ENCODE measurements at regions of chr15 and their contacts with region 1.

Region 1: DNA sequence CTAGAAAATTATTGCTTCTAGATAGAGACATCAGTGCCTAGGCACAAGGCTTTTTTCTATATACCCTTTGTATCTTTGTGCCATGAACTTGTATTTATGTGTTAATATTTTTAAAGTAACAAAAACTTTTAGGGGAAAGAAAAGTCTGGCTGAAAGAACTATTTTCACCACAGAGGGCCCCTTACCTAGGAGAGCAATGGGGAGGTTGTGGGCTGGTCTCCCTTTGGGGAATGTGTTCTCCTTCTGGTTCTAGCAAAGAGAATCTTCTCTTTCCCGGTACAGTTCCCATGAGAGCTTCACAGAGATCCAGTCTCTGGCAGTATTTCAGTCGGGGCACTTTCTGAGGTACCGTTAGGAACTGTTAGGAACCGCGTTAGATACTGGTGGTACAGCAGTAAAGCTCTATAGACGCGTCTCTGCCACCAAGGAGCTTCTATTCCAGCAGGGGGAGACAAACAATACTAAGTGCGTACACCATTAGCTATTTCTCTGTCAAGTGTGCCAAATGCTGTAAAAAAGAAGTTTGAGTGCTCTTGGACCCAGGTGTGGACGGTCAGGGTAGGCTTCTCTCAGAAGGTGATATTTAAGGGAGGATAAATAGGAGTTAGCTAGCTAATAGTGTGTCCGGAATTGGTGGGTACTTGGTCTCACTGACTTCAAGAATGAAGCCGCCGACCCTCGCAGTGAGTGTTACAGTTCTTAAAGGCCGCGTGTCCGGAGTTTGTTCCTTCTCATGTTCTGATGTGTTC is 4.6 kb upstream of the EPB42 start:
- DNase-seq: no peak
- ATAC-seq: peak; percentile 83
- H3K4me3 Mint-ChIP-seq: no peak overlapping the region
- H3K27ac Mint-ChIP-seq: no peak overlapping the region
- H3K4me1 Mint-ChIP-seq: peaks cover 4% of the 10 kb centered on the region
- H3K27me3 Mint-ChIP-seq: peaks cover 8% of the 10 kb centered on the region
- CTCF ChIP-seq: no peak

Region 2: DNA sequence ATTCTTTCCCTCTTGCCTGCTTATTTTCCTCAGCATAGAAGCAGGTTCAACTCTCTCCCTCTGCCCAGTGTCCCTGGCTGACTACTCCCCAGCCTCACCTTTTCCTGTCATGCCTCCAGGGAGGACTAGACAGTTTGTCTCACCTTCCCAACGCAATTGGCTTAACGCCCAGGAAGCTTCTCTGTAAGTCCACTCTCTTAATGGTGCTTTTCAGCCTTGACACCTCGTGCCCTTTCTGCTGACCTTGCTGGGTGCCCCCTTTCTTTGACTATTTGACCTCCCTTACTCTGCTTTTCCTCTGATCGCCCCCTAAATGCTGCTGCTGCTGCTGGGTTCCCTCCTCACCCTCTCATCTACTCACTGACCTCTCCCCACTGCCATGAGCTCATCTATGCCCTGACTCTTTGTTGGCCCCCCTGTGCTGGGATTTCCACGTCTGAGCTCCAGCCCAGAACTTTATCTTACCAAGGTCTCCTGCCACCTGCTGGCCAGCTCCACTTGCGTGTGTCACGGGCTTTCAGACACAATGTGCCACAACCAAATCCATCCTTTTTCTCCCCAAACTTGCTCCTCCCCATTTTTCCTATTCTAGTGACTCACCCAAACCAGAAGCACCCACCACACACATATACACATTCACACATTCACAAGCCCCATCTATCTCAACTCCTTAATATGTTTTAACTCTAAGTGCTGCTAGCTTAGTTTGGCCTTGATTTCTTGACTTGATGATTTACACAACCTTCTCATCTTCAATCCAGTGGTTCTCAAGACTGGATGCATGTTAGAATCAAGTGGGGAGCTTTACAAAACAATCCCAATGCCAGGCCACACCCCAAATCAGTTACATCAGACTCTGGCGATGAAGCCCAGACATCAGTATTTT is 21.1 kb before region 1 on chr15:
- CTCF ChIA-PET with region 1: interaction called, 14 read pairs
- POLR2A ChIA-PET with region 1: no interaction called
- intact Hi-C with region 1: no loop called
- DNase-seq: peak; percentile 28
- ATAC-seq: peak; percentile 56
- H3K4me3 Mint-ChIP-seq: no peak overlapping the region
- H3K27ac Mint-ChIP-seq: no peak overlapping the region
- H3K4me1 Mint-ChIP-seq: peaks cover 6% of the 10 kb centered on the region
- H3K27me3 Mint-ChIP-seq: peaks cover 8% of the 10 kb centered on the region
- CTCF ChIP-seq: peak; percentile 29

Region 3: GRCh38 chr15:43270676-43271306 is 45.4 kb after region 1 on chr15:
- CTCF ChIA-PET with region 1: interaction called, 11 read pairs
- POLR2A ChIA-PET with region 1: no interaction called
- intact Hi-C with region 1: loop called (anchors 1 kb)
- DNase-seq: no peak
- ATAC-seq: peak; percentile 95
- H3K4me3 Mint-ChIP-seq: peak overlapping the region; percentile 54
- H3K27ac Mint-ChIP-seq: peak overlapping the region; percentile 91
- H3K4me1 Mint-ChIP-seq: peaks cover 33% of the 10 kb centered on the region
- H3K27me3 Mint-ChIP-seq: no peaks in the 10 kb centered on the region
- CTCF ChIP-seq: no peak